Heart right ventricle (tissue), 16 donors: ENCODE measurements at regions of chr10 and their contacts with region 1.

Region 1: DNA sequence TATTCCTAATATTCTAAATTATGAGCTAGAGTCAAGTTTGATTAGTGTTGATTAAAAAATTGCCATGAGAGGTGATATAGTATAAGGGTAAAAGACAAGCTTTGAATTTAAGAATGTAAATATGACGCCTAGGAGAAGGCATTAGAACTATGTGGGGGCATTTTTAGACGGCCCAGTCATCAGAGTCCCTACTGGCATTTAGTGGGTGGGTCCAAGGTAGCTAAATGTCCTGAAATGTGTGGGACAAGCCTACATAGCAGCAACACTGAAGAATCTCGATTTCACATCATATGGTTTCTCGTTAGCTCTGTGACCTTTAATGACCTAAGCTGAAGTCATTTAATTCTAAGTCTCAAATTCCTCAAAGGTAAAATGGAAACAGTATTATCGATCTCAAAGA is 133.5 kb downstream of the SGMS1 start:
- DNase-seq: no peak
- ATAC-seq: peak in 1 of 8 donors; percentile 50
- H3K4me3 ChIP-seq: no peak overlapping the region
- H3K27ac ChIP-seq: no peak overlapping the region
- H3K4me1 ChIP-seq: peaks cover 0 to 16% (median 0%) of the 10 kb centered on the region in 9 donors
- H3K27me3 ChIP-seq: no peaks in the 10 kb centered on the region
- CTCF ChIP-seq: no peak

Region 2: GRCh38 chr10:50508315-50509051 is 18.2 kb after region 1 on chr10:
- intact Hi-C with region 1: loop called in 1 of 10 experiments (anchors 2 kb)
- DNase-seq: no peak
- ATAC-seq: no peak
- H3K4me3 ChIP-seq: no peak overlapping the region
- H3K27ac ChIP-seq: peak overlapping the region in 2 of 10 donors; percentile 7 to 45
- H3K4me1 ChIP-seq: peaks cover 0 to 54% (median 45%) of the 10 kb centered on the region in 9 donors
- H3K27me3 ChIP-seq: no peaks in the 10 kb centered on the region
- CTCF ChIP-seq: no peak